ENCODE measurements at regions of chr16 and their contacts with region 1.

Region 1: DNA sequence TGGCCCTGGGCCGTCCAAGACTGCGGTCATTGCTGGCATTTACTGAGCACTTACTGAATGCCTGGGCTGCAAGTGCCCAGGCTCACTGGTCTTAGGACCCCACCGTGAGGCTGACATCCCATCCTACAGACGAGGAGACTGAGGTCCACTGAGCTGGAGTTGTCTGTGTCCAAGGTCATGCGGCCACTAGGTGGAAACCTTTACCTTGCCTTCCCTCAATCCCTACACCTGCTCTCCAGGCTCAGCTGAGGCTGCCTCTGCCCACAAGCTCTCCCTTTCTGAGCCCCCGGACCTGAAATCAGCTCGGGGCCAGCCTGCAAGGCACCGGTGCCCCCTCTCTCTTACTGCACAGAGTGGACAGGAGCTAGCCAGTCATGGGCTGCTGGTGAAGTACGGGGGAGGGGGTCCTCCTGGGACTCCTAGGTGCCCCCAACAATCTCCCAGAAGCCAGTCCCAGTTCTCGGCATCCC is 1.5 kb downstream of the CASKIN1 start:
- DNase-seq: peak; percentile 25 to 49 (median 32)
- H3K4me3 ChIP-seq: no peak overlapping the region
- H3K4me3 Mint-ChIP-seq: peak overlapping the region in 1 of 2 donors; percentile 74
- H3K27ac ChIP-seq: no peak overlapping the region
- H3K27ac Mint-ChIP-seq: peak overlapping the region in 1 of 7 donors; percentile 53
- H3K4me1 ChIP-seq: peaks cover 3 to 7% of the 10 kb centered on the region in 2 donors
- H3K4me1 Mint-ChIP-seq: peaks cover 4% of the 10 kb centered on the region
- H3K27me3 ChIP-seq: peaks cover 35 to 54% of the 10 kb centered on the region in 2 donors
- H3K27me3 Mint-ChIP-seq: peaks cover 51 to 68% (median 58%) of the 10 kb centered on the region in 3 donors
- CTCF ChIP-seq: peak; percentile 41

Region 2: GRCh38 chr16:2121853-2122252 is 73.0 kb before region 1 on chr16:
- intact Hi-C with region 1: no loop called
- DNase-seq: no peak
- H3K4me3 ChIP-seq: no peak overlapping the region
- H3K4me3 Mint-ChIP-seq: no peak overlapping the region
- H3K27ac ChIP-seq: no peak overlapping the region
- H3K27ac Mint-ChIP-seq: no peak overlapping the region
- H3K4me1 ChIP-seq: peaks cover 16 to 20% of the 10 kb centered on the region in 2 donors
- H3K4me1 Mint-ChIP-seq: peaks cover 19% of the 10 kb centered on the region
- H3K27me3 ChIP-seq: peaks cover 0 to 8% of the 10 kb centered on the region in 2 donors
- H3K27me3 Mint-ChIP-seq: peaks cover 6 to 17% (median 7%) of the 10 kb centered on the region in 3 donors
- CTCF ChIP-seq: no peak

Region 3: GRCh38 chr16:2233872-2234812 is 39.3 kb after region 1 on chr16:
- intact Hi-C with region 1: no loop called
- DNase-seq: no peak
- H3K4me3 ChIP-seq: no peak overlapping the region
- H3K4me3 Mint-ChIP-seq: no peak overlapping the region
- H3K27ac ChIP-seq: no peak overlapping the region
- H3K27ac Mint-ChIP-seq: no peak overlapping the region
- H3K4me1 ChIP-seq: peaks cover 5 to 6% of the 10 kb centered on the region in 2 donors
- H3K4me1 Mint-ChIP-seq: peaks cover 5% of the 10 kb centered on the region
- H3K27me3 ChIP-seq: peaks cover 18 to 38% of the 10 kb centered on the region in 2 donors
- H3K27me3 Mint-ChIP-seq: peaks cover 33 to 46% (median 33%) of the 10 kb centered on the region in 3 donors
- CTCF ChIP-seq: no peak

Region 4: GRCh38 chr16:2251483-2252240 is 56.8 kb after region 1 on chr16 and contains the start of gene ECI1:
- intact Hi-C with region 1: loop called in 1 of 2 experiments (anchors 5 kb)
- DNase-seq: peak; percentile 91 to 93 (median 92)
- H3K4me3 ChIP-seq: peak within 1 kb of the TSS; percentile 62 to 85 (median 68)
- H3K4me3 Mint-ChIP-seq: peak within 1 kb of the TSS; percentile 87 to 92
- H3K27ac ChIP-seq: peak within 1 kb of the TSS; percentile 71 to 75
- H3K27ac Mint-ChIP-seq: peak within 1 kb of the TSS; percentile 78 to 92 (median 86)
- H3K4me1 ChIP-seq: peaks cover 19 to 20% of the 10 kb centered on the region in 2 donors
- H3K4me1 Mint-ChIP-seq: peaks cover 15% of the 10 kb centered on the region
- H3K27me3 ChIP-seq: no peaks in the 10 kb centered on the region
- H3K27me3 Mint-ChIP-seq: peaks cover 0 to 1% (median 0%) of the 10 kb centered on the region in 3 donors
- CTCF ChIP-seq: peak; percentile 67
- polyA plus RNA-seq, gene ECI1: 29.9 to 74.5 (median 52.3) TPM

Region 5: DNA sequence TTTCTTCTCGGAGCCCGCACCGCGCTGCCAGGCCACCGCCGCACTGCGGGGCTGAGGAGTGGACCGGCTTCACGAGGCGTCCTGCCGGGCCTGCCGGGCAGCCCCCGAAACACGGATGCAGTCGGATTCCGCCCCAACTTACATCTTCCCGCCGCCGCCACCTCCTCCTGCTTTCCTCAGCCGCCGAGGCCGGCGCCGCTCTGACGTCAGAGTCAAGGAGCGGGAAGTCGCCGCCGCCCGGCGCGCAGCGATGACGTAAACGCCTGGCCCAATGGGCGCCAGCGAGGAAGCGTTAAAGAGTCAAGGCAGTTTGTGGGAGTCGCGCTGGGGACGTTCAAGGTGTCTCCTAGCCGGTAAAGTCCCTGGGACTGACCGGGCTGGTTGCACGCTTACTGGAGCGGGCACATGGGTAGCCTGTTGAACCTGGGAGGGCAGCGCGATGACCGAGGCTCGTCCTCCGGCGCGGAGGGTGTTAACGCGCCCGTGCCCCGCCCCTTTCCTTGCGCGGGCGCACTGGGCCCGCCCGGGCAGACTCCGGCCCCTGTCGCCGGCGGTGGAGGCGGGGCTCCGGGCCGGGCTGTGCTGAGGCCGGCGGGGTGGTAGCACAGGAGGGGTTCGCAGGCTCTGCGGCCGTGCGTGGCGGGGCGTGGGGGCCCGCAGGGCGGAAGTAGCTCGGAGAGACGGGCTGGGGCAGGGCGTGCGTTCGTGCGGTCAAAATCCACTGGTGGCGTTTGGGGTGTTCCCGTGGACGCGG is 73.2 kb after region 1 on chr16 and contains the start of gene RNPS1:
- intact Hi-C with region 1: no loop called
- DNase-seq: peak; percentile 93 to 98 (median 96)
- H3K4me3 ChIP-seq: peak within 1 kb of the TSS; percentile 67 to 88 (median 72)
- H3K4me3 Mint-ChIP-seq: peak within 1 kb of the TSS; percentile 86 to 96
- H3K27ac ChIP-seq: peak within 1 kb of the TSS; percentile 92 to 97
- H3K27ac Mint-ChIP-seq: peak within 1 kb of the TSS; percentile 95 to 100 (median 99)
- H3K4me1 ChIP-seq: peaks cover 27 to 41% of the 10 kb centered on the region in 2 donors
- H3K4me1 Mint-ChIP-seq: peaks cover 39% of the 10 kb centered on the region
- H3K27me3 ChIP-seq: no peaks in the 10 kb centered on the region
- H3K27me3 Mint-ChIP-seq: peaks cover 0 to 4% (median 2%) of the 10 kb centered on the region in 3 donors
- CTCF ChIP-seq: no peak
- polyA plus RNA-seq, gene RNPS1: 93.7 to 176 (median 106) TPM

Measured in CD14-positive monocyte (primary cell).